IMR-90 (cell line): ENCODE measurements at regions of chr17 and their contacts with region 1.

Region 1: DNA sequence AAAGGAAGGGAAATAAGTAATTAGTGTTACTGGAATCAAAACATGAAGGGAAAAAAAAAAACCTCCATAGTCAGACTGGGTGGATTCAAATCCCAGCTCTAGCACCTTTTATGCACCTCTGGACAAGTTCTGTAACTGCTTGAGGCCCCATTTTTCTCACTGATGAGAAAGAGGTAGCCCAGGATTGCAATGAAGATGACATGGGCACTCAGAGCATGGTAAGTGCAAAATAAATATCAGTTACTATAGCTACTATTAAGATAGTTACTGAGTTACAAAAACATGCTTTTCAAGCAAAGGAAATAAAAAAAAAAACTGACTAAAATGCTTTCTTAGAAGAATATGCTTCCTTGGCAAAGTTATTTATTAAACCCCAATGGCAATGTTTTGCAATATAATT is 58.8 kb downstream of the CEP95 start:
- DNase-seq: no peak
- ATAC-seq: no peak
- H3K4me3 ChIP-seq: no peak overlapping the region
- H3K27ac ChIP-seq: no peak overlapping the region
- H3K4me1 ChIP-seq: no peaks in the 10 kb centered on the region
- H3K27me3 ChIP-seq: no peaks in the 10 kb centered on the region
- CTCF ChIP-seq: no peak
- POLR2A ChIP-seq: no peak
- RAD21 ChIP-seq: no peak

Region 2: GRCh38 chr17:63842540-63843386 is 722.8 kb before region 1 on chr17 and contains the start of gene SMARCD2:
- CTCF ChIA-PET with region 1: no interaction called
- POLR2A ChIA-PET with region 1: no interaction called
- dilution Hi-C with region 1: no loop called
- in situ Hi-C with region 1: no loop called
- intact Hi-C with region 1: no loop called
- DNase-seq: peak; percentile 99
- ATAC-seq: peak; percentile 86
- H3K4me3 ChIP-seq: peak within 1 kb of the TSS; percentile 81
- H3K27ac ChIP-seq: peak within 1 kb of the TSS; percentile 84
- H3K4me1 ChIP-seq: peaks cover 23% of the 10 kb centered on the region
- H3K27me3 ChIP-seq: no peaks in the 10 kb centered on the region
- CTCF ChIP-seq: no peak
- POLR2A ChIP-seq: peak; percentile 65
- RAD21 ChIP-seq: no peak
- total RNA-seq, gene SMARCD2: 72.8 and 91.2 TPM in 2 replicates

Region 3: GRCh38 chr17:64534175-64534574 is 31.4 kb before region 1 on chr17:
- CTCF ChIA-PET with region 1: no interaction called
- POLR2A ChIA-PET with region 1: no interaction called
- dilution Hi-C with region 1: no loop called
- in situ Hi-C with region 1: no loop called
- intact Hi-C with region 1: no loop called
- DNase-seq: no peak
- ATAC-seq: peak; percentile 4; the same call in 1 of the 2 replicates
- H3K4me3 ChIP-seq: no peak overlapping the region
- H3K27ac ChIP-seq: no peak overlapping the region
- H3K4me1 ChIP-seq: no peaks in the 10 kb centered on the region
- H3K27me3 ChIP-seq: no peaks in the 10 kb centered on the region
- CTCF ChIP-seq: peak; percentile 16; the same call in 1 of the 2 replicates
- POLR2A ChIP-seq: 0 out of 2 replicates have a peak, but pooled peaks have one; percentile 0
- RAD21 ChIP-seq: no peak

Region 4: DNA sequence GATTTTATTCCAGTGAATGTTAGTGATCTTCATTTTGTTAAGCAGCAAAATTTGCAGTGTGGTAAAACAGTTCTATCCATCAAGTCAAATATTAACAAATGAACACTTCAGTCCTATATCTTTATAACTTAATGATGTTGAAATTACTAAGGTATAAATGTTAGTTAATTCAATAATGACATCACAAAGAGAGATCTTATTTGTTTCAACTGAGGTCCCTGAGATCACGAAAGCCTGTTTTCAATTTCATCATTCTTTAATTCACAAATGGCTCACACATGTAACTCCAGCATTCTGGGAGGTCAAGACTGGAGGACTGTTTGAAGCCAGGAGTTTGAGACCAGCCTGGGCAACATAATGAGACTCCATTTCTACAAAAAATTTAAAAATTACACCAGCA is 82.7 kb after region 1 on chr17:
- CTCF ChIA-PET with region 1: no interaction called
- POLR2A ChIA-PET with region 1: no interaction called
- dilution Hi-C with region 1: no loop called
- in situ Hi-C with region 1: no loop called
- intact Hi-C with region 1: loop called (anchors 5 kb)
- DNase-seq: no peak
- ATAC-seq: no peak
- H3K4me3 ChIP-seq: no peak overlapping the region
- H3K27ac ChIP-seq: peak overlapping the region; percentile 7; the same call in 1 of the 2 replicates
- H3K4me1 ChIP-seq: peaks cover 3% of the 10 kb centered on the region
- H3K27me3 ChIP-seq: no peaks in the 10 kb centered on the region
- CTCF ChIP-seq: no peak
- POLR2A ChIP-seq: no peak
- RAD21 ChIP-seq: no peak